Naive thymus-derived CD4-positive, alpha-beta T cell (primary cell): ENCODE measurements at regions of chr1 and their contacts with region 1.

Region 1: GRCh38 chr1:21344750-21345443 is 54.6 kb upstream of the ECE1 start:
- DNase-seq: no peak
- ATAC-seq: peak; percentile 33
- H3K4me3 ChIP-seq: peak overlapping the region; percentile 59
- H3K4me3 Mint-ChIP-seq: peak overlapping the region in 8 of 10 donors; percentile 85 to 92 (median 90)
- H3K27ac ChIP-seq: peak overlapping the region; percentile 72
- H3K27ac Mint-ChIP-seq: peak overlapping the region; percentile 47 to 94 (median 88)
- H3K4me1 ChIP-seq: peaks cover 23 to 45% of the 10 kb centered on the region in 2 donors
- H3K4me1 Mint-ChIP-seq: peaks cover 30 to 44% (median 44%) of the 10 kb centered on the region in 7 donors
- H3K27me3 ChIP-seq: no peaks in the 10 kb centered on the region
- H3K27me3 Mint-ChIP-seq: no peaks in the 10 kb centered on the region

Region 2: GRCh38 chr1:21058035-21058793 is 286.7 kb before region 1 on chr1:
- CTCF ChIA-PET with region 1: no interaction called
- POLR2A ChIA-PET with region 1: no interaction called
- intact Hi-C with region 1: no loop called
- DNase-seq: no peak
- ATAC-seq: no peak
- H3K4me3 ChIP-seq: no peak overlapping the region
- H3K4me3 Mint-ChIP-seq: no peak overlapping the region
- H3K27ac ChIP-seq: no peak overlapping the region
- H3K27ac Mint-ChIP-seq: no peak overlapping the region
- H3K4me1 ChIP-seq: no peaks in the 10 kb centered on the region
- H3K4me1 Mint-ChIP-seq: peaks cover 0 to 4% (median 0%) of the 10 kb centered on the region in 7 donors
- H3K27me3 ChIP-seq: no peaks in the 10 kb centered on the region
- H3K27me3 Mint-ChIP-seq: no peaks in the 10 kb centered on the region

Region 3: GRCh38 chr1:21270086-21270689 is 74.7 kb before region 1 on chr1:
- CTCF ChIA-PET with region 1: interaction called, 13 read pairs
- POLR2A ChIA-PET with region 1: interaction called, 12 read pairs
- intact Hi-C with region 1: loop called in 1 of 2 experiments (anchors 1 kb)
- DNase-seq: peak; percentile 67 to 87 (median 80)
- ATAC-seq: peak; percentile 95
- H3K4me3 ChIP-seq: no peak overlapping the region
- H3K4me3 Mint-ChIP-seq: peak overlapping the region in 2 of 10 donors; percentile 6 to 48
- H3K27ac ChIP-seq: no peak overlapping the region
- H3K27ac Mint-ChIP-seq: peak overlapping the region; percentile 8 to 80 (median 48)
- H3K4me1 ChIP-seq: peaks cover 0 to 18% of the 10 kb centered on the region in 2 donors
- H3K4me1 Mint-ChIP-seq: peaks cover 13 to 34% (median 18%) of the 10 kb centered on the region in 7 donors
- H3K27me3 ChIP-seq: no peaks in the 10 kb centered on the region
- H3K27me3 Mint-ChIP-seq: no peaks in the 10 kb centered on the region

Region 4: DNA sequence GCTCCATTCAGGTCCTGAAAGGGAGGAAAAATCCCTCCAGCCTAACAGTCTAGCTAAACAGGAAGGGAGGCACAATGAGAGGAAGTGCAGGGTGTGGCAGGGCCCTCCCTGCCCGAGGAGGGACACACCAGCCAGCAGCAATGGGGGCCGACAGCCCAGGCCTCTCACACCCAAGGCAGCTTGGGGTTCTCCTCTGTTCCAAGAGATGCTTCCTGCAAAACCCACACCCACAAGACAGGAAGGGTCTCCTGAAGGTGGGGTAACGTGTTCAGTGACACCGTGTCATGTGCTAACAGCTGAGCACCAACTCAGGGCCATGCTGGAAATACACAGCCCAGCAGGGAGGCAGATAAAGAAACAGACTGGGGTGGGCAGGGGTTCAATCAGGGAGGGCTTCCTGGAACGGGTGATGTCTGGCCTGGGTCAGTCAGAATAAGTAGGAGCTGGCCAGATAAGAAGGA is 64.9 kb before region 1 on chr1:
- CTCF ChIA-PET with region 1: no interaction called
- POLR2A ChIA-PET with region 1: interaction called, 12 read pairs
- intact Hi-C with region 1: no loop called
- DNase-seq: peak in 4 of 9 donors; percentile 15 to 22 (median 18)
- ATAC-seq: peak; percentile 68
- H3K4me3 ChIP-seq: peak overlapping the region; percentile 21
- H3K4me3 Mint-ChIP-seq: peak overlapping the region; percentile 61 to 82 (median 75)
- H3K27ac ChIP-seq: peak overlapping the region; percentile 66
- H3K27ac Mint-ChIP-seq: peak overlapping the region; percentile 93 to 99 (median 95)
- H3K4me1 ChIP-seq: peaks cover 34 to 37% of the 10 kb centered on the region in 2 donors
- H3K4me1 Mint-ChIP-seq: peaks cover 29 to 61% (median 54%) of the 10 kb centered on the region in 7 donors
- H3K27me3 ChIP-seq: no peaks in the 10 kb centered on the region
- H3K27me3 Mint-ChIP-seq: no peaks in the 10 kb centered on the region

Region 5: GRCh38 chr1:21287905-21288514 is 56.9 kb before region 1 on chr1:
- CTCF ChIA-PET with region 1: no interaction called
- POLR2A ChIA-PET with region 1: interaction called, 83 read pairs
- intact Hi-C with region 1: loop called in 1 of 2 experiments (anchors 1 kb)
- DNase-seq: no peak
- ATAC-seq: no peak
- H3K4me3 ChIP-seq: no peak overlapping the region
- H3K4me3 Mint-ChIP-seq: peak overlapping the region in 9 of 10 donors; percentile 25 to 93 (median 88)
- H3K27ac ChIP-seq: no peak overlapping the region
- H3K27ac Mint-ChIP-seq: peak overlapping the region in 8 of 9 donors; percentile 29 to 85 (median 73)
- H3K4me1 ChIP-seq: peaks cover 27 to 33% of the 10 kb centered on the region in 2 donors
- H3K4me1 Mint-ChIP-seq: peaks cover 35 to 64% (median 55%) of the 10 kb centered on the region in 7 donors
- H3K27me3 ChIP-seq: no peaks in the 10 kb centered on the region
- H3K27me3 Mint-ChIP-seq: no peaks in the 10 kb centered on the region

Region 6: GRCh38 chr1:21294266-21294989 is 50.5 kb before region 1 on chr1:
- CTCF ChIA-PET with region 1: interaction called, 8 read pairs
- POLR2A ChIA-PET with region 1: interaction called, 83 read pairs
- intact Hi-C with region 1: loop called (anchors 1 kb)
- DNase-seq: peak; percentile 57 to 95 (median 91)
- ATAC-seq: peak; percentile 87
- H3K4me3 ChIP-seq: peak overlapping the region; percentile 69
- H3K4me3 Mint-ChIP-seq: peak overlapping the region; percentile 81 to 97 (median 93)
- H3K27ac ChIP-seq: peak overlapping the region; percentile 94
- H3K27ac Mint-ChIP-seq: peak overlapping the region; percentile 91 to 100 (median 98)
- H3K4me1 ChIP-seq: peaks cover 60 to 62% of the 10 kb centered on the region in 2 donors
- H3K4me1 Mint-ChIP-seq: peaks cover 50 to 91% (median 84%) of the 10 kb centered on the region in 7 donors
- H3K27me3 ChIP-seq: no peaks in the 10 kb centered on the region
- H3K27me3 Mint-ChIP-seq: no peaks in the 10 kb centered on the region

Region 7: GRCh38 chr1:21324368-21325141 is 20.3 kb before region 1 on chr1:
- CTCF ChIA-PET with region 1: no interaction called
- POLR2A ChIA-PET with region 1: interaction called, 76 read pairs
- intact Hi-C with region 1: loop called (anchors 1 to 2 kb)
- DNase-seq: peak in 8 of 9 donors; percentile 42 to 78 (median 56)
- ATAC-seq: peak; percentile 70
- H3K4me3 ChIP-seq: peak overlapping the region; percentile 25
- H3K4me3 Mint-ChIP-seq: peak overlapping the region; percentile 72 to 88 (median 84)
- H3K27ac ChIP-seq: peak overlapping the region; percentile 75
- H3K27ac Mint-ChIP-seq: peak overlapping the region; percentile 85 to 97 (median 95)
- H3K4me1 ChIP-seq: peaks cover 38 to 60% of the 10 kb centered on the region in 2 donors
- H3K4me1 Mint-ChIP-seq: peaks cover 43 to 99% (median 83%) of the 10 kb centered on the region in 7 donors
- H3K27me3 ChIP-seq: no peaks in the 10 kb centered on the region
- H3K27me3 Mint-ChIP-seq: no peaks in the 10 kb centered on the region

Region 8: GRCh38 chr1:21334214-21335087 is 10.4 kb before region 1 on chr1:
- CTCF ChIA-PET with region 1: interaction called, 11 read pairs
- POLR2A ChIA-PET with region 1: interaction called, 76 read pairs
- intact Hi-C with region 1: loop called (anchors 1 kb)
- DNase-seq: peak; percentile 58 to 84 (median 76)
- ATAC-seq: peak; percentile 88
- H3K4me3 ChIP-seq: peak overlapping the region; percentile 74
- H3K4me3 Mint-ChIP-seq: peak overlapping the region; percentile 82 to 97 (median 91)
- H3K27ac ChIP-seq: peak overlapping the region; percentile 81
- H3K27ac Mint-ChIP-seq: peak overlapping the region; percentile 92 to 99 (median 97)
- H3K4me1 ChIP-seq: peaks cover 41 to 78% of the 10 kb centered on the region in 2 donors
- H3K4me1 Mint-ChIP-seq: peaks cover 55 to 95% (median 85%) of the 10 kb centered on the region in 7 donors
- H3K27me3 ChIP-seq: no peaks in the 10 kb centered on the region
- H3K27me3 Mint-ChIP-seq: no peaks in the 10 kb centered on the region